A673 (cell line): ENCODE measurements at regions of chr2 and their contacts with region 1.

Region 1: GRCh38 chr2:173402405-173402974 is 47.8 kb downstream of the CDCA7 start:
- DNase-seq: peak; percentile 82
- H3K4me3 ChIP-seq: peak overlapping the region; percentile 13
- H3K27ac ChIP-seq: no peak overlapping the region
- H3K4me1 ChIP-seq: peaks cover 10% of the 10 kb centered on the region
- H3K27me3 ChIP-seq: peaks cover 42% of the 10 kb centered on the region
- CTCF ChIP-seq: peak; percentile 91

Region 2: DNA sequence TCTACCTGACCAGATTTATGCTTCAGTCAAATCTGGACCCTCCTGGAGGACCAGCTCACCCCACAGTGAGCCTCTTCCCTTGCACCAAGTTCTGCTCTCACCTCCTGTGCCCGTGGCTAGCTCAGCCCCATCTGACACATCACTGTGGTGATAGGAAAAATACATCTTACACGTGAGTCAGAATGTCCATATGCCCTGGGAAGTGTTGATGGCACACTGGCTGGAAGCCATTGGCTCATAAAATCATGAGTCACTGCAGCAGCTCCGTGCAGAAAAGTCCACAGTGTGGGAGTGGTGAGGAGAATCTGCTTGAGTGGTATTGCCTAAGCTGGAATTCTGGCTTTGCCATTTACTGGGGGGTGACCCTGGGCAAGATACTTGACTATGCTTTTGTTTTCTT is 709.5 kb before region 1 on chr2:
- CTCF ChIA-PET with region 1: no interaction called
- POLR2A ChIA-PET with region 1: no interaction called
- intact Hi-C with region 1: no loop called
- DNase-seq: peak; percentile 71
- H3K4me3 ChIP-seq: no peak overlapping the region
- H3K27ac ChIP-seq: no peak overlapping the region
- H3K4me1 ChIP-seq: peaks cover 3% of the 10 kb centered on the region
- H3K27me3 ChIP-seq: no peaks in the 10 kb centered on the region
- CTCF ChIP-seq: no peak

Region 3: DNA sequence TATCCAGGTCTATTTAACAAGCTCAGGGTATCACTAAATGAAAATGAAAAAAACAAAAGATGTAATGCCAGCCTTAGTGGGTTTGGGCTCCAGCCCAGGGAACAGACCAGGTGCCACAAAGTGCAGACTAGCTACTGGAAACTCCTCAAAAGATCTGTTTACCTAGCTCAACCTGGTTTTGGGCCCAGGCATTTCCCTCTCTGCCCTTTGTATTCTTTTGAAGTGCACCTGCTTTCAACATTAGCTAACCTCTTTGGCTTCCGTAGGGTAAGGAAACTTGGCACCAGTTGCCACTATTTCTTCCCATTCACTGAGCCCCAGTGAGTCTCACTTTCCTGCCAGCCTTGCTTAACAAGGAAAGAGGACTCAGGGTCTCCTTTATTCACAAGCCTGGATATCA is 171.4 kb before region 1 on chr2:
- CTCF ChIA-PET with region 1: no interaction called
- POLR2A ChIA-PET with region 1: no interaction called
- intact Hi-C with region 1: no loop called
- DNase-seq: no peak
- H3K4me3 ChIP-seq: no peak overlapping the region
- H3K27ac ChIP-seq: no peak overlapping the region
- H3K4me1 ChIP-seq: no peaks in the 10 kb centered on the region
- H3K27me3 ChIP-seq: no peaks in the 10 kb centered on the region
- CTCF ChIP-seq: no peak

Region 4: GRCh38 chr2:173343906-173344305 is 58.6 kb before region 1 on chr2:
- CTCF ChIA-PET with region 1: no interaction called
- POLR2A ChIA-PET with region 1: no interaction called
- intact Hi-C with region 1: no loop called
- DNase-seq: no peak
- H3K4me3 ChIP-seq: no peak overlapping the region
- H3K27ac ChIP-seq: no peak overlapping the region
- H3K4me1 ChIP-seq: no peaks in the 10 kb centered on the region
- H3K27me3 ChIP-seq: no peaks in the 10 kb centered on the region
- CTCF ChIP-seq: no peak

Region 5: GRCh38 chr2:173448938-173449471 is 46.5 kb after region 1 on chr2:
- CTCF ChIA-PET with region 1: interaction called, 13 read pairs
- POLR2A ChIA-PET with region 1: no interaction called
- intact Hi-C with region 1: loop called (anchors 2 kb)
- DNase-seq: peak; percentile 92
- H3K4me3 ChIP-seq: peak overlapping the region; percentile 41
- H3K27ac ChIP-seq: no peak overlapping the region
- H3K4me1 ChIP-seq: no peaks in the 10 kb centered on the region
- H3K27me3 ChIP-seq: peaks cover 14% of the 10 kb centered on the region
- CTCF ChIP-seq: peak; percentile 89

Region 6: GRCh38 chr2:173571021-173571882 is 168.8 kb after region 1 on chr2:
- CTCF ChIA-PET with region 1: interaction called, 5 read pairs
- POLR2A ChIA-PET with region 1: no interaction called
- intact Hi-C with region 1: loop called (anchors 10 kb)
- DNase-seq: peak; percentile 61
- H3K4me3 ChIP-seq: no peak overlapping the region
- H3K27ac ChIP-seq: no peak overlapping the region
- H3K4me1 ChIP-seq: no peaks in the 10 kb centered on the region
- H3K27me3 ChIP-seq: peaks cover 3% of the 10 kb centered on the region
- CTCF ChIP-seq: peak; percentile 40; the same call in 1 of the 2 replicates

Region 7: DNA sequence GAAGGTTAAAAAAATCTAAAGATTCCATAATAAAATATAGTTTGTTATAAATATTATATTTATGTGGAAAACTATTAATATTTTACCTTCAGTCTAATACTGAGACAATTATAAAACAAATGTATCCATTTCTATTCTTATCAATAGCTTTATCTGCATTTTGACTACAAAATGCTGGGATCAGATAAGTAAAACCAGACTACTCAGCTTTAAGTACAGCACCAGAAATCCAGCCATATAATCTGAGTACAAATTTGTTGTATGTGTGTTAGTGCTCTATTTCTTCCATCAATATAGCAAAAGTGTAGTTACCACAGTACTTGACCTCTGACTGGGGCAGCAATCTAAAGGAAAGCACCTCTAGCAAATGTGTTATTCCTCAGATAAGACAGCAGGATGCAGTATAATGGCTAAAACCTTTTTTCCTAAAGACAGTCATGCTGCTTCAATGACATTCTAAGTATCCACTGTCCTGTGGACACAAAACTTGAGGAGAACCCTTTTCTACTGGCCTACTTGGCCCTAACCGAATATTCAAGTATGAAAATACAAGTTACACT is 777.8 kb after region 1 on chr2:
- CTCF ChIA-PET with region 1: no interaction called
- POLR2A ChIA-PET with region 1: no interaction called
- intact Hi-C with region 1: no loop called
- DNase-seq: no peak
- H3K4me3 ChIP-seq: no peak overlapping the region
- H3K27ac ChIP-seq: peak overlapping the region; percentile 17
- H3K4me1 ChIP-seq: no peaks in the 10 kb centered on the region
- H3K27me3 ChIP-seq: no peaks in the 10 kb centered on the region
- CTCF ChIP-seq: peak; percentile 31; the same call in 1 of the 2 replicates